Activated T-helper 1 cell treated with anti-CD3 and anti-CD28 coated beads, Interleukin-12 subunit alpha, Interleukin-12 subunit beta, Interleukin-2, Interleukin-4 antibody, amounts not matched to agents 30 ng/mL and 10 ng/mL and 1 ng/mL, durations not matched to agents 14 hours and 24 hours and 36 hours (primary cell): ENCODE measurements at regions of chr22 and their contacts with region 1.

Region 1: GRCh38 chr22:24845041-24845898 is 39.3 kb downstream of the SGSM1 start:
- DNase-seq: no peak
- H3K4me3 Mint-ChIP-seq: no peak overlapping the region
- H3K27ac Mint-ChIP-seq: no peak overlapping the region
- H3K4me1 Mint-ChIP-seq: no peaks in the 10 kb centered on the region
- H3K27me3 Mint-ChIP-seq: peaks cover 6% of the 10 kb centered on the region

Region 2: GRCh38 chr22:24768537-24769374 is 76.5 kb before region 1 on chr22:
- intact Hi-C with region 1: loop called (anchors 1 kb)
- DNase-seq: peak; percentile 13
- H3K4me3 Mint-ChIP-seq: no peak overlapping the region
- H3K27ac Mint-ChIP-seq: no peak overlapping the region
- H3K4me1 Mint-ChIP-seq: no peaks in the 10 kb centered on the region
- H3K27me3 Mint-ChIP-seq: peaks cover 4% of the 10 kb centered on the region

Region 3: GRCh38 chr22:24803011-24803542 is 42.2 kb before region 1 on chr22:
- intact Hi-C with region 1: loop called (anchors 2 kb)
- DNase-seq: peak; percentile 35
- H3K4me3 Mint-ChIP-seq: no peak overlapping the region
- H3K27ac Mint-ChIP-seq: no peak overlapping the region
- H3K4me1 Mint-ChIP-seq: peaks cover 22% of the 10 kb centered on the region
- H3K27me3 Mint-ChIP-seq: peaks cover 9% of the 10 kb centered on the region